ENCODE measurements at regions of chr7 and their contacts with region 1.

Region 1: GRCh38 chr7:67377939-67378862 is 381.6 kb downstream of the TYW1 start:
- DNase-seq: peak; percentile 77 to 91
- H3K4me3 ChIP-seq: no peak overlapping the region
- H3K27ac ChIP-seq: no peak overlapping the region
- H3K4me1 ChIP-seq: no peaks in the 10 kb centered on the region
- H3K27me3 ChIP-seq: peaks cover 0 to 5% (median 0%) of the 10 kb centered on the region in 4 experiments; a peak in 2 of 7 replicates
- CTCF ChIP-seq: peak; percentile 77 to 95 (median 89)
- EP300 ChIP-seq: no peak
- POLR2A ChIP-seq: no peak
- RAD21 ChIP-seq: peak; percentile 96 to 97

Region 2: GRCh38 chr7:67267914-67268313 is 110.3 kb before region 1 on chr7:
- CTCF ChIA-PET with region 1: no interaction called
- POLR2A ChIA-PET with region 1: no interaction called
- DNase-seq: no peak
- H3K4me3 ChIP-seq: no peak overlapping the region
- H3K27ac ChIP-seq: no peak overlapping the region
- H3K4me1 ChIP-seq: no peaks in the 10 kb centered on the region
- H3K27me3 ChIP-seq: no peaks in the 10 kb centered on the region
- CTCF ChIP-seq: no peak
- EP300 ChIP-seq: no peak
- POLR2A ChIP-seq: no peak
- RAD21 ChIP-seq: no peak

Region 3: GRCh38 chr7:67392643-67393438 is 14.6 kb after region 1 on chr7:
- CTCF ChIA-PET with region 1: interaction called, 13 read pairs
- POLR2A ChIA-PET with region 1: interaction called, 15 read pairs
- DNase-seq: peak in 1 of 2 experiments; percentile 23
- H3K4me3 ChIP-seq: peak overlapping the region in 3 of 4 experiments; percentile 5 to 45 (median 19); a peak in 4 of 8 replicates
- H3K27ac ChIP-seq: peak overlapping the region; percentile 82
- H3K4me1 ChIP-seq: peaks cover 3 to 17% (median 8%) of the 10 kb centered on the region in 4 experiments; a peak in 6 of 7 replicates
- H3K27me3 ChIP-seq: no peaks in the 10 kb centered on the region
- CTCF ChIP-seq: no peak
- EP300 ChIP-seq: peak in 1 of 2 experiments; percentile 54; a peak in 1 of 3 replicates
- POLR2A ChIP-seq: peak in 1 of 2 experiments; percentile 74; a peak in 2 of 3 replicates
- RAD21 ChIP-seq: no peak

Region 4: GRCh38 chr7:67484244-67484751 is 106.1 kb after region 1 on chr7:
- CTCF ChIA-PET with region 1: interaction called, 12 read pairs
- POLR2A ChIA-PET with region 1: no interaction called
- DNase-seq: peak; percentile 61 to 71
- H3K4me3 ChIP-seq: peak overlapping the region in 3 of 4 experiments; percentile 24 to 41 (median 38); a peak in 4 of 8 replicates
- H3K27ac ChIP-seq: no peak overlapping the region
- H3K4me1 ChIP-seq: peaks cover 0 to 3% (median under 1%) of the 10 kb centered on the region in 4 experiments; a peak in 3 of 7 replicates
- H3K27me3 ChIP-seq: no peaks in the 10 kb centered on the region; a peak in 3 of 7 replicates
- CTCF ChIP-seq: peak; percentile 62 to 82 (median 68)
- EP300 ChIP-seq: no peak
- POLR2A ChIP-seq: no peak
- RAD21 ChIP-seq: peak; percentile 91 to 92

Region 5: DNA sequence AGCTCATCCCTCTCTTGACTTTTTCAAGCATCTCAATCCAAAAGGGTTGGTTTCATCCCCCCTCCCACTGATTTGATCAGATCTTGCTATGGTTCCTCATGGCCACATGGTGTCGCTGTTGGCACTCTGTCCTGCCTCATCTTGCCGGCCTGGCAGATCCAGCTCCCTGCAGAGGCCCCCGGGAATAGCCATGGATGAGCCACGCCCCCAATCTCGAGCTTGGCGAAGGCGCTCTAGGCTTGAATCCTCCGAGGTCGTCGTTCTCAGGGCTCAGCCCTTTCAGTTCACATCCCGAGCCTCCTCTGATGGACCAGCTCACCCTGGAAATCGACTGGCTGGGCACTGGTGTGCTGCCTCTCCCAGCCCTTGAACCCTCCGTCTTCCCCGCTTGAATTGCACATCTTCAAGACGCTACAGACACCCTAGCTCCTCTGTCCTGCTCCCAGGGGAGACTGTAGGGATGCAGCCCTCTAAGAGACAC is 247.1 kb after region 1 on chr7:
- CTCF ChIA-PET with region 1: interaction called, 12 read pairs
- POLR2A ChIA-PET with region 1: no interaction called
- DNase-seq: peak; percentile 83 to 87
- H3K4me3 ChIP-seq: peak overlapping the region in 3 of 4 experiments; percentile 23 to 53 (median 27); a peak in 5 of 8 replicates
- H3K27ac ChIP-seq: no peak overlapping the region
- H3K4me1 ChIP-seq: no peaks in the 10 kb centered on the region; a peak in 2 of 7 replicates
- H3K27me3 ChIP-seq: peaks cover 0 to 2% (median 0%) of the 10 kb centered on the region in 4 experiments; a peak in 2 of 7 replicates
- CTCF ChIP-seq: peak; percentile 83 to 90 (median 86)
- EP300 ChIP-seq: no peak
- POLR2A ChIP-seq: no peak
- RAD21 ChIP-seq: peak; percentile 96 to 99

Measured in H1 (cell line).